Posterior cingulate gyrus (tissue), 11 donors: ENCODE measurements at regions of chr19 and their contacts with region 1.

Region 1: DNA sequence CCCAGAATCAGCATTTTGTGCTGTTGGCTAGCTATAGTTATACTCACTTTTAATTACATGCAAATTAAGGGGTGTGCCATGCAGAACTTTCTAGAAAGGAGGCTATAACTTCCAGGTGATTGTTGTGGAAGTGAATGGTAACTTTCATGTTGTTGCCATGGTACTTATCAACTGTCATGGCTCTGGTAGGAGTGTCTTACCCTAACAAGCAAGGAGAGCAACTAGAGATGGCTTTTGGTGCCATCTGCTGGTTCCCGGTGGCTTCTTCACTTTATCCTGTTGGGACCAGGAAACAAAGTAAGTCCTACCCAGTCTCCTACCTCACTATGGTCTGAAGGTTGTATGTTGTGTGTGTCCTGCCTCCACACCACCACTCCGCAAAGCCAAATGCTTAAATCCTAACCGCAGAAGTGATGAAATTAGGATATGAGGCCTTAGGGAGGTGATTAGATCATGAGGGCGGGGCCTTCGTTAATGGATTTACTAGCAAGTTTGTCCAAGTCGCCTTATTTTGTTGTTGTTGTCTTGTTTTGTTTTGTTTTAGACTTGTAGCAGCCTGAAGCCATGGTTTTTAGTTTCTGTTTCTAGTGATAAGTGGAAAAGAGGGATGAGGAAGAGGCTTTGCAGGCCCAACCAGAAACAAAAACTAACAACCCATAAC is 22.6 kb downstream of the FBXL12 start:
- DNase-seq: peak; percentile 55 to 97 (median 82)

Region 2: DNA sequence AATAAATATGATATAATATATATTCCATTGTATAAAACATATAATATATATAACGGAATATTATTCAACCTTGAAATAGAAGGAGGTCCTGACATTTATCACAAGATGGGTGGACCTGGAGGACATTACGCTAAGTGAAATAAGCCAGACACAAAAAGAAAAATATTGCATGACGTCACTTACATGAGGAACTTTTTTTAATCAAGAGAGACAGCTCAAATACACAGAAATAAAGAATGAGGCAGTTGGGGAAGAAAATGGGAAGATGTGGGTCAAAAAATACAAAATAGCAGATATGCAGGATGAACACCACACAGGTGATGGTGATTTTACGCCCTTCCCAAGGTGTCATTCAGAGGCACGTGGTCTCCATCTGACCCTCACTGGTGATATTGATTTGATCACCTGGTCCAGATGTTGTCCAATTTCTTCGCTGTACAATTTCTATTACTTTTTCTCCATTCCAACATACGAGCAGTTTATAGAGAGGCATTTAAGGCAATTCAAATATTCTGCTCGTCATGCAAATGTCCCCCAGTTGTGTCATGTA is 656.6 kb before region 1 on chr19:
- intact Hi-C with region 1: loop called (anchors 10 kb)
- DNase-seq: no peak

Region 3: DNA sequence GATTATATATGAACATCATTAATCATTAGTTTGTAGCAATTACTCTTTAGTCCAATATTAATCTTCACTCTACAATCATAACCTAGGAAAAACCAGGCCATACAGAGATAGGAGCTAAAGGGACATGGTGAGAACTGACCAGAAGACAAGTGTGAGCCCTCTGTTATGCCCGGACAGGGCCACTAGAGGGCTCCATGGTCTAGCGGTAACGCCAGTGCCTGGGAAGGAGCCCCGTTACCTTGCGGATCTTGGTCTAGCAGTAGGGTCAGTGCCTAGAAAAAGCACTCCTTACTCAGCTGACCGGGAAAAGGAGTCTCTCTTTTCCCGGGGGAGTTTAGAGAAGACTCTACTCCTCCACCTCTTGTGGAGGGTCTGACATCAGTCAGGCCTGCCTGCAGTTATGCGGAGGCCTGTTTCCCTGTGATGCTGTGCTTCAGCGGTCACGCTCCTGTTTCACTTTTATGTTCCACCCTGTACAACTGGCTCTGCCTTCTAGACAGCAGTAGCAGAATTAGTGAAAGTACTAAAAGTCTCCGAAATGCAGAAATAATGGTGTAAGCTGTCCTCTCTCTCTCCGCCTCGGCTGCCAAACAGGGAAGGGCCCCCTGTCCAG is 590.6 kb before region 1 on chr19:
- intact Hi-C with region 1: loop called (anchors 5 kb)
- DNase-seq: peak; percentile 23 to 96 (median 68)

Region 4: DNA sequence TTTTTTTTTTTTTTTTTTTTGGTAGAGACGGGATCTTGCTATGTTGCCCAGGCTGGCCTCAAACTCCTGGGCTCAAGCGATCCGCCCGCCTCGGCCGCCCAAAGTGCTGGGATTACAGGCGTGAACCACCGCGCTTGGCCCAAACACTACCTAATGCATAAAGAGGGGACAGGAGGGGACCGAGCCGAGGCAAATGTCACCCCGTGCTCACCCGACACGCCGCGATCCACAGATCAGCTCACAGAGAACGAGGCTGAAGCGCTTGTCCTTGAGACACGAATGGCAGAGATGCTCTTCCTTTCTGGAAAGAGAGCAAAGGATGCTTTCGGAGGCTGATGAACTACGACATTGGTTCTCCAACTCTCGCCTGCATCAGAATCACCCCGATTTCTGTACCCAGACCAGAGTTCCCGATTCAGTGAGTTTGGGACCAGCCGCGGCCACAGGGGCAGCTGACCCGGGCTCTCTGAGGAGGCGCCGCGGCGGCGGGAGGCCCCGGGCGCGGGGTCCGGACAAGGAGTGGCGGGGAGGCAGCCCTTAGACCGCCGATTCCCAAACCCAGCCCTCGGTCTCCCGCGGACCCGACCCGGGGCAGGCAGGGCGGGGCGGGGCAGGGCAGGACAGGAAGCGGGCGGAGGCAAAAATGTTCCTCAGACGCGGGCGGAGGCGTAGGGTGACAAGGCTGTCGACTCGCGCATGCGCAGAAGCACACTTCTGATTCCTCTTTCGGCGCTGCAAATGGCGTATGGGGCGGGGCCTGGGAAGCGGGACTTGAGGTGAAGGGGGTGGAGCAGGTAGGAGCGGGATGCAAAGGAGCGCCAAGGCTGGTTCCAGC is 486.9 kb before region 1 on chr19 and contains the start of gene ZNF699:
- intact Hi-C with region 1: loop called (anchors 10 kb)
- DNase-seq: peak; percentile 95 to 99 (median 98)

Region 5: GRCh38 chr19:9435279-9436268 is 360.7 kb before region 1 on chr19 and contains the start of gene ZNF266:
- intact Hi-C with region 1: loop called (anchors 10 kb)
- DNase-seq: peak; percentile 76 to 97 (median 86)

Region 6: DNA sequence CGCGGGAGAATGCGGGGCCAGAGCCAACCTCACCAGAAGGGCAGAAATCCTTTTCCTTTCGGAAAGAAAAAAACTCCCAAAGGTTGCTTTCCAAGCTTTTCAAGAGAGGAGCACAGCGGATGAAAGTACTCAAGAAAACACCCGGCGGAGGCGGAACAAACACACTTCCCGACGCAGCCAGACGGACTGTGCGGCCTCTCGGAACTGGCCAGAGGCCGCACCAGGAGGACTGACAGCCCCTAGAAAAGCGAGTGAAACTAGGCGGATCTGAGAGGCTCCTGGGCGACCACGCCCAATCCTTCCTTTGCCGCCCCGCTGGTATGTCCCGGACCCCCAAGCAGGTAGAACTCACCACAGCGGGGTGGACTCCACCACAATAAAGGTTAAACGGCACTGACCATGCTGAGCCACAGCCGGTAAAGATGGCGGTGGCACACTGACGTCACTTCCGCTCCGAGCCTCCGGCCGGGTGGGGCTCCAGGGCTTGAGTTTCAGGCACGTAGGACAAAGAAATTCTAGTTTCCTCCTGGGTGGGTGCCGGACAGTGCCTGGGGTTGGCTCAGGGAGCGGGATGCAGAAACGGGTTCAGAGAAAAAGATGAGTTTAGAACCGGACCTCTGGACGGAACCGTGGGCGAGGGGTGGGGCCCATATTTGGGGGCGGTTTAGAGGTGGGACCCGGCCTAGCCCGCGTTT is 121.4 kb before region 1 on chr19 and contains the start of gene ZNF562:
- intact Hi-C with region 1: no loop called
- DNase-seq: peak; percentile 81 to 98 (median 88)

Region 7: GRCh38 chr19:9865732-9866501 is 69.7 kb after region 1 on chr19:
- intact Hi-C with region 1: no loop called
- DNase-seq: no peak

Region 8: DNA sequence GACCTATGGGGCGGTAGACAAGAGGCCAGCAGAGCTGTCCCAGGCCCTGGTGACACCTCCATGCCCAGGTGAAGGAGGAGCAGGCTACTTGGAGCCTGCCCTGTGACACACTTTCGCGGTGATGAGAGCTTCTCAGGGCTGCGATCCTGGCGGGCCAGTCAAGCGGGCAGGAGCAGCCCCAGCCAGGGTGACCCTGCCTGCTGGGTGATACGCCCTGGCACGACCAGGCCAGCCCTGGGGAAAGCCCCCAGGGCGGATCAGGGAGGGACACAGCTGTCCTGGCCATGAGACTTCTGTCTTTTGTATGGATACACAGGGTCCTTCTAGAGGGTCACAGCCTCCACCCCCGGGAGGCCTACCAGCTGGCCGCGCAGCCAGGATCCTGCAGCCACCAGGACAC is 934.7 kb after region 1 on chr19:
- intact Hi-C with region 1: no loop called
- DNase-seq: peak in 3 of 10 donors; percentile 46 to 91 (median 69)